Lower leg skin (tissue), 4 donors: ENCODE measurements at regions of chr3 and their contacts with region 1.

Region 1: DNA sequence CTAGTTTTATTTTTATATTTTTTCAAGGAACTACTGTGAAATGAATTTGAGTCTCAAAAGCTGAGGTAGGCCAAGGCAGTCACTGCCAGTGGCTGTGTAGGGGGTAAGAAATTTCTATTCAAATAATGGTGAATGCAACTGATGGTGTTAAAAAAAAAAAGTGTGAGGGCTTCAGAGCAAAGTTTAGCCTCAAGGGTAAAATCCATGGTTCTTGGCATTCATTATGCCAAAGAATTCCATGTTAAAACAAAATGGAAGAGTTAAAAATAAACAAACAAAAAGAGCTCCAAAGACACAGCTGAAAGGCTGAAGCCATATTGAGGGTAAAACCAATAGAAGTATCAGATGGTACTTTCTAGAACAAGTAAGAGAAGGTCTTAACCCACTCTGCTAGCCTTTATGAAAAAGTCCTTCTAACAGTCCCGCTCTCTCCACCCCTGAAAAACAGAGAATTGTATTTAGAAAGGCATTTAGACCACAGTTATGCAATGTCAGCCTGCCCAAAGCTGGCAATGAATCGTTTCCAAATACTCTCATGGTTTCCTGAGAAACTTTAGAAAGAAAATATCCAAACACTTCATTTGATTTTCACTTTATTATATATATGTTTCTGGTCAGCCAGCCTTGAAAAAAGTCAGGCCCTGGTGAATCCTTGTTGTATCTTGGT is 158.4 kb upstream of the GMNC start:
- DNase-seq: no peak
- H3K4me3 ChIP-seq: no peak overlapping the region
- CTCF ChIP-seq: no peak
- POLR2A ChIP-seq: no peak

Region 2: GRCh38 chr3:190840146-190840545 is 180.7 kb before region 1 on chr3:
- intact Hi-C with region 1: no loop called
- DNase-seq: no peak
- H3K4me3 ChIP-seq: no peak overlapping the region
- CTCF ChIP-seq: no peak
- POLR2A ChIP-seq: no peak

Region 3: DNA sequence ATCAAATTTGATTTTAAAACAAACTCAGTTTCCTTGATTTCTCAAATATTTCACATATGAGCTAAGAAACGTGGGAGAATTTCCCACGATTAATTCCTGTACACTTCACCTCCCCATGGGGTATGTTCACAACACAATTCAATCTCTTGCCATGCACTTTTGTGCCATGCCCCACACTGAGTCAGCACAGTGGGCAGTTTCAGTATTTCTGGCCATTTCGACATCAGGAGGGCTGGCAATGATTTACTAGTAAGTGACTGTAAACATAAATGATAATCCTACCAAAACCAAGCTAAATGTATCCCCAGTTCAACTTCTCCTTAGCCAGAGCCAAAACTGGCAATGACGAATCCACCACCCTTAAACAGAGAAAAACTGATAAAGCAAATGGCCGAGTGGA is 1412.8 kb after region 1 on chr3:
- intact Hi-C with region 1: loop called (anchors 5 kb)
- DNase-seq: no peak
- H3K4me3 ChIP-seq: no peak overlapping the region
- CTCF ChIP-seq: no peak
- POLR2A ChIP-seq: no peak